ENCODE measurements at regions of chr16 and their contacts with region 1.

Region 1: GRCh38 chr16:68790130-68790761 is 53.1 kb upstream of the TANGO6 start:
- DNase-seq: no peak
- H3K4me3 ChIP-seq: no peak overlapping the region
- CTCF ChIP-seq: no peak
- POLR2A ChIP-seq: no peak

Region 2: DNA sequence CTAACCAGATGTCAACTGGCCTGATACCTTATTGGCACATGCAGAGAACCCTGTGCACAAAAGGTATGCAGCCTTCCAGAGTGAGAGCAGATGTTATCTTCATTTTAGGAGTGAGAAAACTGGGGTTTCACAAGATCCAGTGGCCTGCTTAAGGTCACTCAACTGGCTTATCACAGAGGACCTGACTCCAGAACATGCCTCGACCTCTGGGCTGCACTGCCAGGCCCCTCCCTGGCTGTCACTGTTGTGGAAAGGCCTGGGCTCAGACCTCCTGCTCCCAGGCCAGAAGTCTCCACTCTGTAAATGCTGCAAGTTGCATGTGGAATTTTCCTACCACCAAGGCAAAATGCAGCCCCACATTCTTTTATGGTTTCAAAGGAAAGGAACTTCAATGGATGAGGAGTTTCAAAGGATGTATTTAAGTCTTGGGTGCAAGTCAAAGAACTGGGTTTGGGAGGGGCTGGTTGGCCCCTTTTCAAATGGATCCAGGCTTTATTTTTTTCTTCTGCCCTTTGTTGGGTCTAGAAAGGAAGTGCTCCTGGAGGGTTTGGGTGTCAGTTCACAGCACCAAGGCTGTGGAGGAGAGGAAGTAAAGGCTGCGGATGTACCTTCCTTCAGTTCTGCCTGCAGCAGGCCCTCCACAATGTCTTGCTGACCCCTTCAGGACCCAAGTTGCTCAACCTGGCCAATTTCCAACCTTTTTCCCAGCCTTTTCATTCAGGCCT is 311.6 kb before region 1 on chr16:
- intact Hi-C with region 1: loop called (anchors 5 kb)
- DNase-seq: no peak
- H3K4me3 ChIP-seq: no peak overlapping the region
- CTCF ChIP-seq: no peak
- POLR2A ChIP-seq: no peak

Region 3: GRCh38 chr16:68704232-68704867 is 85.9 kb before region 1 on chr16:
- intact Hi-C with region 1: loop called (anchors 10 kb)
- DNase-seq: peak; percentile 62 to 91
- H3K4me3 ChIP-seq: no peak overlapping the region
- CTCF ChIP-seq: peak in 1 of 3 donors; percentile 76
- POLR2A ChIP-seq: no peak

Region 4: DNA sequence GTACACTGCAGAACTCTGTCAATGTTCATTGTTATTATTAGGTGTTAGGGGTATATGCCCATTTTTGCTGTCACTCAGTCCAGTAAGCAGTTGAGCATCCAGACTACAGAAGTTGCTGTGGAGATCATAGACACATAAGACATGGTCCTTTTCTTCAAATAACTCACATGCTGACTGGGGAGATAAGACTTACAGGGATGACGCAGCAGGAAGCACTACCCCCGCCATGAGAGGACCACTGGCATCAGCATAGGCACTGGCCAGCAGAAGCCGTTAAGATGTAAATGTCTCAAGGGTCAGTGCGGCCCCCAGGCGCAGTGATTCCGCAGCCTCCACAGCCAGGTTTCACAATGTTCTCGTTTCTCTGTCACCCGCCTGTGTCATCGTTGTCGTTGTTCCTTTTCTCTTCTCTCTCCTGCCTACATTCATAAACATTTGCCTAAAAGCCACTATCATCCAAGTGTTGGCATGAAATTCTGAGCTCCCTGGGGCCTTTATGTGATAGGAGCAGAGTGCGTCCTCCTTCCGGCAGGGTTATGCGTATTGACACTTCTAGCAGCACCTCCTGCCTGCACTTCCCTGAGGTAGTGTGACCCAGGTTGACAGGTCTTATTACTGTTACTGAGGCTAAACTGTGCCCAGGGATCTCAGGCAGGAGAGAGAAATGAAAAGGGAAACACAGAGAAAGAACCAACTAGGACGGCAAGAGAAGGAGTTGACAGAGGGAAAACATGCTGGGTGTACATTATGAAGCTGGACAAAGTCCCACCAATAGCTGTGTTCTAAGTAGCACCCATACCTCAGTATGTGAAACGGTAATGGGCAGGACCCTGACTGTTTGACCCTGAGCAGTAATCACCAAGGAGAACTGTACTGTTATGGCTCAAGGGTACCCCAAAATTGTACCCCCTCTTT is 71.0 kb after region 1 on chr16:
- intact Hi-C with region 1: no loop called
- DNase-seq: peak in 1 of 2 donors; percentile 25
- H3K4me3 ChIP-seq: no peak overlapping the region
- CTCF ChIP-seq: no peak
- POLR2A ChIP-seq: no peak

Region 5: GRCh38 chr16:68992521-68992920 is 202.3 kb after region 1 on chr16:
- intact Hi-C with region 1: no loop called
- DNase-seq: no peak
- H3K4me3 ChIP-seq: no peak overlapping the region
- CTCF ChIP-seq: no peak
- POLR2A ChIP-seq: no peak

Region 6: GRCh38 chr16:69709456-69710084 is 919.3 kb after region 1 on chr16:
- intact Hi-C with region 1: no loop called
- DNase-seq: peak in 1 of 2 donors; percentile 31
- H3K4me3 ChIP-seq: no peak overlapping the region
- CTCF ChIP-seq: no peak
- POLR2A ChIP-seq: no peak